ENCODE measurements at regions of chr10 and their contacts with region 1.

Region 1: GRCh38 chr10:76547352-76547972 is 1090.1 kb downstream of the KCNMA1 start:
- DNase-seq: peak; percentile 72
- H3K4me3 ChIP-seq: no peak overlapping the region
- H3K27ac ChIP-seq: no peak overlapping the region
- H3K4me1 ChIP-seq: peaks cover 19% of the 10 kb centered on the region
- H3K27me3 ChIP-seq: no peaks in the 10 kb centered on the region
- CTCF ChIP-seq: peak; percentile 56 to 72
- POLR2A ChIP-seq: no peak

Region 2: DNA sequence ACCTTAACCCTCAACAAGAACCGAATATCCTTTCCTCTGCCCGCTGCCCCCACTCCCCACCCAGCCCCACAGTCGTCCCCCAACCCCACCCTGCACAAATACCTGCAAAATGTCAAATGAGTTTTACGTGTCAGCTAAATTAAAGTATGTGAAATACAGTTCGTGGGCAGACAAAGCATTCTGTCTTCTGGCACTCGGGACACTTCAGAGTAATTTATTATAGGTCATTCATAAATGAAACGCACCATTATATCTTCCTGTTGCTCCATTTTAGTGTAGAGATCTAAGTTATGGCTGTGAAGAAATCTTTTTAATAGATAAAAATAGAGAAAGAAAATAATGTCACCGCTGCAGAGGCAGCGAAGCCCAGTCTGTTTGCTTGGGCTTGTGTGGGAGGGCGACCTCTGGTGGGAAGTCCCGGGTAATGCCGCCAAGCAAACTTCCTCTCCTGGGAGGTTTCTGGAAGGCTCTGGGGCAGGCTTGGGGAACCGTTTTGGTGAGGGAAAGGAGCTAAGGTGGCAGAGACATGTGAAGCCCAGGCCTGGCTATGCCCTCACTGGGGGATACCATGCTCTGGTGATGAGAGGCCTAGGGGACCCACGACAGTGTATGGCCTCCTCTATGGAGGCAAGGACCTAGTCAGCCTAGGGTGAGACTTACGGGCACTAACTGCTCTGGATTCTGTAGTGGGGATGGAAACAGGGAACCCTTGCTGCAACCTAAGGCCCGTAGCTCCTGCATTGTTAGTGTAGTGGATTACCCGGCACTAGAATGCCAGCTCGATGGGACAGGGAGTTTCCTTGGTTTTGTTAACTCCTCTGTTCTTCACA is 511.1 kb before region 1 on chr10:
- CTCF ChIA-PET with region 1: interaction called, 29 read pairs
- POLR2A ChIA-PET with region 1: no interaction called
- dilution Hi-C with region 1: no loop called
- intact Hi-C with region 1: loop called (anchors 1 kb)
- DNase-seq: peak; percentile 57
- H3K4me3 ChIP-seq: no peak overlapping the region
- H3K27ac ChIP-seq: no peak overlapping the region
- H3K4me1 ChIP-seq: peaks cover 12% of the 10 kb centered on the region
- H3K27me3 ChIP-seq: no peaks in the 10 kb centered on the region
- CTCF ChIP-seq: peak; percentile 87 to 90
- POLR2A ChIP-seq: no peak

Region 3: DNA sequence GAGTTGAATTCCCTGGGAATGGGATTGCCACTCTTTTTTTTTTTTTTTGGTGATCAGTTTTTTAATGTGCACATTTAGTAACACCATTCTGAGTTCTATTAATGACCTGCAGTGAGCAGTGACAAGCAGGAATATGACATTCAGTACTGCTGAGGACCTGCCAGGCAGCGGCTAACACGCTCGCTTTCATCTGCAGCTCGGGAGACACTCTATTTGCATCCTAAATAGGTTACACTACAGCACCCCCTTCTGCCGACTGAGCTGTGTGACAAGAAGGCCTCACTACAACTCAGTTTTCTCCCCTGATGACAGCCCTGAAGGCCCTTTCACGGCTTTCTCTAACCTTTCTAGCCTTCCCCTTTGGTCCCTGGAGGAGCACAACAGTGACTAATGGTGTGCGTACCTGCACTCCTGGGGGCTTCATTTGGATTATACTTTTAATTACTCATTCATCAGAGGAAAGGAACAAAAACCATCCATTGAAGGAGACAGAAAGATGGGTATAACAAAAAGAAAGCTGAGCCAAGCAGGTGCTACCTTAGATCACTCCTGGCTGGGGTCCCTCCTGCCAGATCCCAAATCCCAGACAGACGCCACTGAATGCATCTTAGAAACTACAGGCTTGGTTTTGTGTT is 243.7 kb before region 1 on chr10:
- CTCF ChIA-PET with region 1: interaction called, 21 read pairs
- POLR2A ChIA-PET with region 1: no interaction called
- dilution Hi-C with region 1: no loop called
- intact Hi-C with region 1: loop called (anchors 5 kb)
- DNase-seq: peak; percentile 67
- H3K4me3 ChIP-seq: no peak overlapping the region
- H3K27ac ChIP-seq: no peak overlapping the region
- H3K4me1 ChIP-seq: no peaks in the 10 kb centered on the region
- H3K27me3 ChIP-seq: no peaks in the 10 kb centered on the region
- CTCF ChIP-seq: peak; percentile 38 to 61
- POLR2A ChIP-seq: no peak

Region 4: DNA sequence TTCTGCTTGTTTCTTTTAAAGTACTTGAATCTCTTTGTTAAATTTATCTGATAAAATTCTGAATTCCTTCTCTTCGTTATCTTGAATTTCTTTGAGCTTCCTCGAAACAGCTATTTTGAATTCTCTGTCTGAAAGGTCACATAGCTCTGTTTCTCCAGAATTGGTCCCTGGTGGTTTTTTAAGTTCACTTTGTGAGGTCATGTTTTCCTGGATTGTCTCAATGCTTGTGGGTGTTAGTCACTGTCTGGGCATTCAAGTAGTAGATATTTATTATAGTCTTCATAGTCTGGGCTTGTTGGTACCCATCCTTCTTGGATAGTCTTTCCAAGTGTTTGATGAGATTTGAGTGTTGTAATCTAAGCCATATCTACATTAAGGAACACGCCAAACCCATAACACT is 55.4 kb before region 1 on chr10:
- CTCF ChIA-PET with region 1: interaction called, 3 read pairs
- POLR2A ChIA-PET with region 1: no interaction called
- dilution Hi-C with region 1: no loop called
- intact Hi-C with region 1: loop called (anchors 1 kb)
- DNase-seq: peak; percentile 71
- H3K4me3 ChIP-seq: no peak overlapping the region
- H3K27ac ChIP-seq: peak overlapping the region; percentile 57
- H3K4me1 ChIP-seq: peaks cover 11% of the 10 kb centered on the region
- H3K27me3 ChIP-seq: no peaks in the 10 kb centered on the region
- CTCF ChIP-seq: no peak
- POLR2A ChIP-seq: no peak

Region 5: GRCh38 chr10:77111611-77112550 is 564.4 kb after region 1 on chr10:
- CTCF ChIA-PET with region 1: no interaction called
- POLR2A ChIA-PET with region 1: no interaction called
- dilution Hi-C with region 1: no loop called
- intact Hi-C with region 1: loop called (anchors 5 kb)
- DNase-seq: peak; percentile 82
- H3K4me3 ChIP-seq: no peak overlapping the region
- H3K27ac ChIP-seq: peak overlapping the region; percentile 58
- H3K4me1 ChIP-seq: peaks cover 6% of the 10 kb centered on the region
- H3K27me3 ChIP-seq: no peaks in the 10 kb centered on the region
- CTCF ChIP-seq: peak; percentile 68 to 71
- POLR2A ChIP-seq: no peak